Activated CD4-positive, alpha-beta T cell treated with anti-CD3 and anti-CD28 coated beads for 36 hours (primary cell): ENCODE measurements at regions of chr1 and their contacts with region 1.

Region 1: GRCh38 chr1:32964461-32965250 is at the start of gene RNF19B:
- DNase-seq: peak; percentile 98
- ATAC-seq: peak; percentile 96
- H3K4me3 Mint-ChIP-seq: peak within 1 kb of the TSS; percentile 77
- H3K27ac Mint-ChIP-seq: peak within 1 kb of the TSS; percentile 84
- H3K4me1 Mint-ChIP-seq: peaks cover 59% of the 10 kb centered on the region
- H3K27me3 Mint-ChIP-seq: peaks cover 5% of the 10 kb centered on the region
- total RNA-seq, gene RNF19B: 22.5 to 23.9 TPM

Region 2: GRCh38 chr1:32266921-32267591 is 697.6 kb before region 1 on chr1:
- CTCF ChIA-PET with region 1: no interaction called
- POLR2A ChIA-PET with region 1: no interaction called
- intact Hi-C with region 1: no loop called
- DNase-seq: peak; percentile 49
- ATAC-seq: peak; percentile 40
- H3K4me3 Mint-ChIP-seq: peak overlapping the region; percentile 36
- H3K27ac Mint-ChIP-seq: peak overlapping the region; percentile 97
- H3K4me1 Mint-ChIP-seq: peaks cover 60% of the 10 kb centered on the region
- H3K27me3 Mint-ChIP-seq: no peaks in the 10 kb centered on the region

Region 3: GRCh38 chr1:32801096-32801715 is 163.4 kb before region 1 on chr1:
- CTCF ChIA-PET with region 1: no interaction called
- POLR2A ChIA-PET with region 1: no interaction called
- intact Hi-C with region 1: loop called in 1 of 2 experiments (anchors 5 kb)
- DNase-seq: peak; percentile 59
- ATAC-seq: peak; percentile 63
- H3K4me3 Mint-ChIP-seq: peak overlapping the region; percentile 49
- H3K27ac Mint-ChIP-seq: peak overlapping the region; percentile 69
- H3K4me1 Mint-ChIP-seq: peaks cover 56% of the 10 kb centered on the region
- H3K27me3 Mint-ChIP-seq: no peaks in the 10 kb centered on the region

Region 4: GRCh38 chr1:32992489-32993323 is 28.1 kb after region 1 on chr1:
- CTCF ChIA-PET with region 1: interaction called, 5 read pairs
- POLR2A ChIA-PET with region 1: interaction called, 3 read pairs
- intact Hi-C with region 1: loop called (anchors 1 to 2 kb)
- DNase-seq: peak; percentile 87
- ATAC-seq: peak; percentile 88
- H3K4me3 Mint-ChIP-seq: no peak overlapping the region
- H3K27ac Mint-ChIP-seq: peak overlapping the region; percentile 79
- H3K4me1 Mint-ChIP-seq: peaks cover 43% of the 10 kb centered on the region
- H3K27me3 Mint-ChIP-seq: no peaks in the 10 kb centered on the region

Region 5: GRCh38 chr1:33025181-33025571 is 60.5 kb after region 1 on chr1:
- CTCF ChIA-PET with region 1: interaction called, 5 read pairs
- POLR2A ChIA-PET with region 1: interaction called, 3 read pairs
- intact Hi-C with region 1: loop called (anchors 1 to 2 kb)
- DNase-seq: no peak
- ATAC-seq: no peak
- H3K4me3 Mint-ChIP-seq: no peak overlapping the region
- H3K27ac Mint-ChIP-seq: peak overlapping the region; percentile 67
- H3K4me1 Mint-ChIP-seq: peaks cover 51% of the 10 kb centered on the region
- H3K27me3 Mint-ChIP-seq: no peaks in the 10 kb centered on the region

Region 6: DNA sequence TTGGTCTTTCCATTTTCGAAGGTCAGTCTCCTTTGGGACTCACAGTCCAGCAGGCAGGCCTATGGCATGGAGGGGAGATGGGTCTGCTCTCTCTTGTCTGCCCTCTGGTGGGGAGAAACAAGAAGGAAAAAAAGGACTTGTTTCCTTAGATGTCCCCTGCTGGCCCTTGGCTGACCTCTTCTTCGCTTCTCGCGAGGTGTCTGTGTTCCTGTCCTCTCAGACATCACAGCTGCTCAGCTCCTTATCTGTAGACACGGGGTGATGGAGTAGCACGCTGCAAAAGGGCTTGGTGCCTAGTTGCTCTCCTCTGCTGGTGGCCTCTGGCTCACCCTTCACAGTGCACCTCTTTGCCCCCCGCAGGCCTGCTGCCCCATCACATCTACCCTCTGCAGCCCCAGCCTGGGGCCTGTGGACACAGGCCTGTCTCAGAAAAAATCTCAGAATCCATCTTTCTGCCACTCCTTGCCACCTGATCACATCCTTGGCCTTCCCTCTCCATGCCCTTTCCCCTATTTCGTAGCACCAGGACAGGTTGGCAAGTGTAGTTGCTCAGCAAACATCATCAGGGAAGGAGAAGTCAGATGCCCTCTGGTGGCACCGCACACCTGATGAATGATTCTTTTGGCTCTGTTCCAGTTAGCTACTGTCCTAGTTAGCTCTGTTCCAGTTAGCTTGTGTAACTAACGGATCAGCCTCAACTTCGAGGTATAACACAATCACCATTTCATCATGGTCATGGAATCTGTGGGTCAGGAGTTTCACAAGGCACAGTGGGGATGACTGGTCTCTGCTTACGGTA is 90.8 kb after region 1 on chr1:
- CTCF ChIA-PET with region 1: interaction called, 5 read pairs
- POLR2A ChIA-PET with region 1: no interaction called
- intact Hi-C with region 1: loop called in 1 of 2 experiments (anchors 1 kb)
- DNase-seq: peak; percentile 45
- ATAC-seq: peak; percentile 77
- H3K4me3 Mint-ChIP-seq: no peak overlapping the region
- H3K27ac Mint-ChIP-seq: no peak overlapping the region
- H3K4me1 Mint-ChIP-seq: peaks cover 5% of the 10 kb centered on the region
- H3K27me3 Mint-ChIP-seq: peaks cover 5% of the 10 kb centered on the region

Region 7: DNA sequence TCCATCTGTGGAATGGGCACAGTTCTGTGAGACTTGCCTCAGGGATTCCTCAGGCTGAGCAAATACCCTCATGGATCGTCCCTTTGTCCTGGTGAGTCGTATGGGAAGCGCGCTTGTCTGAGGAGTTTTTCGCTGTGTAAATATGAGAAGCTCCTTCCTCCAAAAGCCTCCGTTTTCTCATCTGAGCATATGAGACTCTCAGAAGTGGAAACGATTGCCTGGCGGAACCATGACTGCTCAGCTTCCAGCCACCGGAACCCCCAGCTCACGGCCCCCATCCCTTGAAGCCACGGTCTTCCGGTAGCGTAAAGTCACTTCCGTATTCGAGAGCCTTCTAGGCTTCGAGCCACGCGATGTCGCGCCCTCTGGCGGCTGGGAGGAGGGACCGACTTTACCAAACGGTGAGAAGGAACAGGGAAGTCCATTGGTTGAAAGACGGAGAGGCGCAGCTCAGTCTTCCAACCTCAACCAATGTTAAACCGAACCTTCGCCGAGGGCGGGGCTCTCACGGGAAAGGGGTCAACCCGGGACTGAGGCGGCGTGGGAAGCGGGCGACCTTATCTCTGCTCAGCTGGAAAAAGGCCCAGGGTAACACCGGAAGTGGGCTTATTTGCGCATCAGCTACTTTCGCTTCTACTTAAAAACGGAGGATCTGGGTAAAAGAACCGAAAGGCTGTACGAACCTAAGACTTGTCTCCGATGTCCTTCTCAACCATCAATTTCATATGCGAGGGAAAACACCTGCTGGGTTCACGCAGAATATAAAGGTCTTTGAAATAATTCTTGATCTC is 162.5 kb after region 1 on chr1:
- CTCF ChIA-PET with region 1: interaction called, 3 read pairs
- POLR2A ChIA-PET with region 1: interaction called, 4 read pairs
- intact Hi-C with region 1: loop called in 1 of 2 experiments (anchors 1 kb)
- DNase-seq: peak; percentile 99
- ATAC-seq: peak; percentile 95
- H3K4me3 Mint-ChIP-seq: peak overlapping the region; percentile 97
- H3K27ac Mint-ChIP-seq: peak overlapping the region; percentile 98
- H3K4me1 Mint-ChIP-seq: peaks cover 40% of the 10 kb centered on the region
- H3K27me3 Mint-ChIP-seq: no peaks in the 10 kb centered on the region

Region 8: GRCh38 chr1:33137800-33138199 is 173.1 kb after region 1 on chr1:
- CTCF ChIA-PET with region 1: no interaction called
- POLR2A ChIA-PET with region 1: no interaction called
- intact Hi-C with region 1: no loop called
- DNase-seq: peak; percentile 59
- ATAC-seq: peak; percentile 33
- H3K4me3 Mint-ChIP-seq: no peak overlapping the region
- H3K27ac Mint-ChIP-seq: no peak overlapping the region
- H3K4me1 Mint-ChIP-seq: peaks cover 4% of the 10 kb centered on the region
- H3K27me3 Mint-ChIP-seq: no peaks in the 10 kb centered on the region

Region 9: DNA sequence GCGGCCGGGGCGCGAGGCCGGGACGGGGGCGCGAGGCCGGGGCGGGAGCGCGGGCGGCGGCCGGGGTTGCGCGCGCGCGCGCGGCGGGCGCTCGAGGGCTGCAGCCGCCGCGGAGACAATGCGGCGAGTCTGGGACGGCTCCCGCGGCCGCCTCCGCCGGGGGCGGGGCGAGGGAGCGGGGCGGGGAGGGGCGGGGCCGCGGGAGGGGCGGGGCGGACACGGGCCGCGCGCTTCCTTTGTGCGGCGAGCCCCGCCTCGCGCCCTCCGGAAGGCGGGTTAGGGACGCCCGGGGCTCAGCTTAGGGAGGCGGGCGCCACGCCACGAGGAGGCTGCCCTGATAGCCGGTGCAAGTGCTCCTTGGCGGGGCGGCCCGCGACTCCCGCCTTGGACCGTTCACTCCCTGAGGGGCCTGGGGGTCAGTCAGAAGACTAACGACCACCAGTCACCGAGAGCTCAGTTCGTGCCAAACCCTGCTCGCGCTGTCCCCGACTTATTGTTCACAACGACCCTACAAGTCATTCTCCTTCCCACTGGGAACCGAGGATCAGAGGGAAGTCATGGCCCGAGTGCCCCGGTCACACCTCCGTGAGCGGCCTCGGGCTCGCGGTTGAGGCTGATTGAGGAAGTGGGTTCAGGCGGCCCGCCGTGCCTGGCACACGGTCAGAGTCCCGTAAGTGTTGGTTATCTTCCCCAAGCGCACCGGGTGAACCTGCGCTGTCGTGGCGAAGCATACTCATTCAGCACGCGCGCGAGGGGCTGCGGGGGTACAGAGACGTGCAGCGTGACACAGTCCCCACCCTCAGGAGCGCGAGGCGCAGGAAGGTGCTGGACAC is 385.3 kb after region 1 on chr1:
- CTCF ChIA-PET with region 1: no interaction called
- POLR2A ChIA-PET with region 1: no interaction called
- intact Hi-C with region 1: loop called in 1 of 2 experiments (anchors 2 kb)
- DNase-seq: peak; percentile 87
- ATAC-seq: peak; percentile 87
- H3K4me3 Mint-ChIP-seq: peak overlapping the region; percentile 89
- H3K27ac Mint-ChIP-seq: peak overlapping the region; percentile 93
- H3K4me1 Mint-ChIP-seq: peaks cover 43% of the 10 kb centered on the region
- H3K27me3 Mint-ChIP-seq: no peaks in the 10 kb centered on the region